ENCODE measurements at regions of chr6 and their contacts with region 1.

Region 1: GRCh38 chr6:136792410-136793262 is at the start of gene MAP3K5:
- DNase-seq: peak; percentile 92
- H3K4me3 ChIP-seq: peak within 1 kb of the TSS; percentile 95 to 97
- H3K27ac ChIP-seq: peak within 1 kb of the TSS; percentile 98 to 99
- H3K4me1 ChIP-seq: peaks cover 5% of the 10 kb centered on the region
- H3K27me3 ChIP-seq: no peaks in the 10 kb centered on the region
- CTCF ChIP-seq: peak; percentile 61 to 97 (median 78)
- POLR2A ChIP-seq: peak; percentile 46
- total RNA-seq, gene MAP3K5: 65.7 to 98.4 TPM

Region 2: GRCh38 chr6:136464148-136464547 is 328.5 kb before region 1 on chr6:
- intact Hi-C with region 1: no loop called
- DNase-seq: no peak
- H3K4me3 ChIP-seq: no peak overlapping the region
- H3K27ac ChIP-seq: no peak overlapping the region
- H3K4me1 ChIP-seq: no peaks in the 10 kb centered on the region
- H3K27me3 ChIP-seq: no peaks in the 10 kb centered on the region
- CTCF ChIP-seq: no peak
- POLR2A ChIP-seq: no peak

Region 3: GRCh38 chr6:136582711-136583471 is 209.7 kb before region 1 on chr6:
- intact Hi-C with region 1: loop called (anchors 5 kb)
- DNase-seq: no peak
- H3K4me3 ChIP-seq: no peak overlapping the region
- H3K27ac ChIP-seq: peak overlapping the region; percentile 29 to 43
- H3K4me1 ChIP-seq: no peaks in the 10 kb centered on the region
- H3K27me3 ChIP-seq: no peaks in the 10 kb centered on the region
- CTCF ChIP-seq: peak; percentile 39 to 74 (median 64)
- POLR2A ChIP-seq: no peak

Region 4: DNA sequence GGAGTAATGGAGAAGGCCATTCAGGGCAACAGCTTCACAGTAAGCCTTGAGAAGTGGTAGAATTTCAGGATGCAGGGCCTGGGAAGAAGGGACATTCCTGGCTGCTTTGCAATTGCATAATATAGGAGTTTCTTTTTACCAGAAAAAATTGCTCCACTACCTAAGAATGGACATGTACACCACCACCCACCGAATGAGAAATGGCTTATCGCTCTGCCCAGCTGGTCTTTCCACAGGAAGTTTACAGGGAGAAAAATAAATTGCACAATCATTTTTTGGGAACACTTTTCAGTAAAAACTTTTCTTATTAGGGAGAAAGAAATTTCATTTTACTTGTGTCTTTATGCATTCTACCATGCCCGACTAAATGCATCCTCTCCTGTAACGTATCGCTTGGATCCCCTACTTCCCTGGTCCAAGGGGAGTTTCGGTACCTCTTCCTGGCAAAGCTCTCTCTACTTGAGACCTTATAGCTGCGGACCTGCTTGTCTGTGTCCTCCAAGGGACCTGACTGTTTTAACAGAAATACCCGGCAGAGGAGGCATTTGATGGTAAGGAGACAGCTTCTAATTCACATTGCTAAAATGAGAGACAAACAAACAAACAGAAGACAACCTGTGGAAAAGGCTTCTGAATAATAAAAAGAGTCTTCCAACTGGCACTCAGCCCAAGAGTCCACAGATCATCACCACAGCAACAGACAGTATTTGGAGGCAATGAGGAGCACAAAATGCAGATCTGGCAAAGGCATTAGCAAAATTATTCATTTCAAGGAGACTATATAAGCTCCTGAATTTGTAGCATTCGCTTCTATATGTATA is 54.6 kb before region 1 on chr6:
- intact Hi-C with region 1: loop called (anchors 5 kb)
- DNase-seq: no peak
- H3K4me3 ChIP-seq: no peak overlapping the region
- H3K27ac ChIP-seq: peak overlapping the region in 1 of 2 donors; percentile 7
- H3K4me1 ChIP-seq: no peaks in the 10 kb centered on the region
- H3K27me3 ChIP-seq: no peaks in the 10 kb centered on the region
- CTCF ChIP-seq: no peak
- POLR2A ChIP-seq: no peak

Measured in prostate gland (tissue), 2 donors.